AG04450 (cell line): ENCODE measurements at regions of chr9 and their contacts with region 1.

Region 1: GRCh38 chr9:94014065-94014654 is 59.0 kb upstream of the BARX1 start:
- DNase-seq: no peak
- H3K4me3 ChIP-seq: no peak overlapping the region
- H3K27ac ChIP-seq: no peak overlapping the region
- H3K27me3 ChIP-seq: no peaks in the 10 kb centered on the region
- CTCF ChIP-seq: peak; percentile 72

Region 2: GRCh38 chr9:93237540-93237939 is 776.6 kb before region 1 on chr9:
- CTCF ChIA-PET with region 1: interaction called, 10 read pairs
- POLR2A ChIA-PET with region 1: no interaction called
- DNase-seq: no peak
- H3K4me3 ChIP-seq: no peak overlapping the region
- H3K27ac ChIP-seq: no peak overlapping the region
- H3K27me3 ChIP-seq: peaks cover 11% of the 10 kb centered on the region
- CTCF ChIP-seq: no peak

Region 3: DNA sequence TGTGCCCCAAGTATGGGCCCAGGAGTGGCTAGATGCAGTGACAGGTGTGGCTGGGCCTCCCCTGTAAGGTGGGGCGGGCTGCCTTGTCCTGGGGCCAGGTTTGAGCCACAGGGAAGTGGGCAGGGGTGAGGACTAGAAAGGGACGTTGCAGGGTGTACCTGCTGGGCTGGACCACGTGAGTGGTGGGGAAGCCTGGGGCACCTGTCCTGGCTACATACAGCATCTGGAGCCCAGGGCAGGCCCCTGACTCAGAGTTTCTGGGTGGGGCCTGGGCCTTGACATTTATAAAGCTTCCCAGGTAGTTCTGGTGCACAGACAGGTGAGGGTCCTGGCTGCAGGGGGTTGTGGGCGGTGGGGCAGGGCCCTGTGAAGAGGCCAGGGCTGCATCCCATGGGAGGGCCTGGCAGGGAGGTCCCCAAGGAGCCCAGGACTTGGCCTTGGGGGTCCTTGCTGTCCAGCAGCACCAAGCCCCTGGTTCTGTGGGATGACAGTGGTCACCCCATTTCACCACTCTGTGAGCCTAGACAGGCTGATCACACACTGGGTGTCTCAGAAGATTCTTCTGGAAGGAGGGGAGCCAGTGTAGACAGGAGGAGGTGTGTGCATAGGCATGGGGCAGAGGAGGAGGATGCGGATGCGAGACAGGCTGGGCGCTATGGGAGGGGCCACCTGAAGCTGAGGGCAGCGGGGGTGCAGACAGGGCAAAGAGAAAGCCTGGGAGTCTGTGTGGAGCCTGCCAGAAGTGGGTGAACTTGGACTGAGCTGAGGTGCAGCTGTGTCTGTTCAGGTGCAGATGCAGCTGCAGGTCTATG is 343.7 kb before region 1 on chr9:
- CTCF ChIA-PET with region 1: no interaction called
- POLR2A ChIA-PET with region 1: no interaction called
- DNase-seq: no peak
- H3K4me3 ChIP-seq: no peak overlapping the region
- H3K27ac ChIP-seq: no peak overlapping the region
- H3K27me3 ChIP-seq: no peaks in the 10 kb centered on the region
- CTCF ChIP-seq: no peak

Region 4: GRCh38 chr9:94002316-94003140 is 11.6 kb before region 1 on chr9:
- CTCF ChIA-PET with region 1: interaction called, 63 read pairs
- POLR2A ChIA-PET with region 1: no interaction called
- DNase-seq: peak; percentile 11
- H3K4me3 ChIP-seq: no peak overlapping the region
- H3K27ac ChIP-seq: no peak overlapping the region
- H3K27me3 ChIP-seq: no peaks in the 10 kb centered on the region
- CTCF ChIP-seq: peak; percentile 68

Region 5: DNA sequence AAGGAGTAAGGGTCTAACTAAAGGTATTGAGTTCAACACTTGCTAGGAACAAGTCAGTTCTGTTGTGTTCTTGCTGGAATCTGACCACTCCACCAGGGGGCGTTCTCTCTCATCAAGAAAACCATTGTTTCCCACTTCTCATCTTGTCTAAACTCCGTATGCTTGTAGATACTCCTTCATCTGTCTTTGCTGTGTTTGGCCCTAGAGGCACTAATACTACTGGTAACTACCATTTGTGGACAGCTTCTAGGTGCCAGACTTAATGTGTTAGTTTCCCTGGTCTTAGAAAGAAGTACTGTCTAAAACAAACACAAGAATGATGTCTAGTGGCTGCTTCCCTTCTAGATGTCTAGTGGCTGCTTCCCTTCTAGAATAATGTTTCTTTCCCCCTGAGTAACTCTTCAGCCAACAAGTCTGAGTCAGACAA is 51.4 kb after region 1 on chr9:
- CTCF ChIA-PET with region 1: interaction called, 26 read pairs
- POLR2A ChIA-PET with region 1: no interaction called
- DNase-seq: peak; percentile 82
- H3K4me3 ChIP-seq: no peak overlapping the region
- H3K27ac ChIP-seq: no peak overlapping the region
- H3K27me3 ChIP-seq: no peaks in the 10 kb centered on the region
- CTCF ChIP-seq: peak; percentile 85

Region 6: DNA sequence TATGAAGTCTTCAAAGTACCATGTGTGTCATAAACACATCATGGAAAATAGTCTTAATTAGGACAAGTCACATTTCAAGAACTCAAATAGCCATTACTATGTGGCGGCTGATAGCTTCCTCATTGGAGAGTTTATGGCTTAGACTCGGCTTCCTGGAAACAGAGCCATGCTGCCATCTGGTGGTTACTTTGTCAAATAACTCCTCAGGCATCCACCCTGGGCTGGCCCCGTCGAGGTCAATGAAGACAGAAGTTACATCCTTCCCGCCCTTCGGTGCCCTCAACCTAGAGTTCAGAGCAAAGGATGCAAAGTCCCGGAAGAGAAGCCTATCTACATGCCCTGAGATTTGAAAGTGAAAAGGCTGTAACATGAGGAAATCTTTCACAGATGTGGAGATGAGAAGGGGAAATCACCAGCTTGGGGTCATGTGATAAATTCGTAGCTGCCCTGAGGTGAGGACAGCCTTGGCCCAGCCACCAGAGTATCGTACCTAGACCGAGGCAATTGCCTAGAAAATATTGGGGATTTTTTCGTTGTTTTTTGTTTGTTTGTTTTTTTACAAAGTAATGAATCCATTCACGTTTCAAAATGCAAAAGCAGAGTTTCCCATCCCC is 199.5 kb after region 1 on chr9:
- CTCF ChIA-PET with region 1: interaction called, 319 read pairs
- POLR2A ChIA-PET with region 1: no interaction called
- DNase-seq: peak; percentile 39
- H3K4me3 ChIP-seq: no peak overlapping the region
- H3K27ac ChIP-seq: no peak overlapping the region
- H3K27me3 ChIP-seq: no peaks in the 10 kb centered on the region
- CTCF ChIP-seq: peak; percentile 85